ENCODE measurements at regions of chr7 and their contacts with region 1.

Region 1: DNA sequence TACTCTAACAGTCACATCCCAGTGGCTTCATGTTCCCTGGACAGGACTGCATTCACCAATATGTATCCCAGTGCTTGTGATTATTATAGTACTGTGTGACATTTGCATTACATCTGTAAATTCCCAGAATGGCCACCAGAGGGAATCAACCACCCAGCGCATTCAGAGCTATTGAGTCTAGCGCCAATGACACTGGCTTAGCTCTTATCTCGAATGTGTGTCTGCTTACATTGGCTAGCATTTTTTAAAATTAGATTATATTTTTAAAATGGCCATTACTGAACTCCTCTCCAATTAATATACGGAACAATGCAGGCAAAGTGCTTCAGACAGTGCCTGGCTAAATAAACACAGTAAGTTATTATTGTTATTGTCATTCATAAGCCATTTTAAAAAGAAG is 36.3 kb downstream of the TRIL start:
- DNase-seq: peak in 1 of 2 donors; percentile 29
- ATAC-seq: peak; percentile 96 to 97
- H3K4me3 ChIP-seq: no peak overlapping the region
- H3K27ac ChIP-seq: no peak overlapping the region
- H3K4me1 ChIP-seq: peaks cover 0 to 4% of the 10 kb centered on the region in 2 donors
- H3K27me3 ChIP-seq: peaks cover 0 to 7% (median 0%) of the 10 kb centered on the region in 3 donors
- CTCF ChIP-seq: peak; percentile 70 to 92 (median 76)
- POLR2A ChIP-seq: no peak

Region 2: DNA sequence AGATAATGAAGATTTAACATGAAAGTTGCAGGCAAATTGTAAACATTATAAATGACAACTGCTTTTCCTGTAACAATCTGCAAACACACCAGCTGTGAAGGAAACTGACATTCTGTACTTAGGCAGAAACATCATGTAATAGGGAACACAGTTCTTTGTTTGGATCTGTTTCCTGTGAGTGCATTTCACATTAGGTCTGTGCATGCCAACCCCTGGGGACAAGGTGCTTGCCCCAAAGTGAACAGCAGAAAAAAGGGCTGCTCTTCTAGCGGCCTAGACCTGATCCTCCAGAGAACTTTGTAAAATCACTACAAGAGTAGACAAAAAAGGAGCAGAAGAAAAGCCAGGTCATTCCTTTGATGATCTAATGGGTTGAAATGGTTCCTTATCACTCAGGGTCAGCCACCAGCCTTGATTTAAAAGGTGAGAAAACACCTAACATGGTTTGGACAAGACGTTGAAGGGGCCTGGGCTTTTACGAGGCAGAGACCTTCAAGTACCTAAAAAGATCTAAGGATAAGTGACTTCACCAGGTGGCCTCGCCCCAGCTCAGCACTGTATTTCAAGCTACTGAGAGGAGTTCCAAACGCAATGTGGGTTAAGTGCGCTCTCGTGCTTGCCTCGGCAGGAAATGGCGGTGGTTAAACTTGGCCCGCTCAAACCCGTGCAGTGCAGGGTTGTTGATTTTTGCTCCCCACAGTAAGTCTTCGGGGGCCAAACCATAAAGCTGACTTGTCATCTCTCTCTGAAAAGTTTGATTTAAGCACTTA is 259.8 kb before region 1 on chr7:
- in situ Hi-C with region 1: no loop called
- intact Hi-C with region 1: no loop called
- DNase-seq: no peak
- ATAC-seq: no peak
- H3K4me3 ChIP-seq: no peak overlapping the region
- H3K27ac ChIP-seq: no peak overlapping the region
- H3K4me1 ChIP-seq: no peaks in the 10 kb centered on the region
- H3K27me3 ChIP-seq: no peaks in the 10 kb centered on the region
- CTCF ChIP-seq: no peak
- POLR2A ChIP-seq: no peak

Region 3: DNA sequence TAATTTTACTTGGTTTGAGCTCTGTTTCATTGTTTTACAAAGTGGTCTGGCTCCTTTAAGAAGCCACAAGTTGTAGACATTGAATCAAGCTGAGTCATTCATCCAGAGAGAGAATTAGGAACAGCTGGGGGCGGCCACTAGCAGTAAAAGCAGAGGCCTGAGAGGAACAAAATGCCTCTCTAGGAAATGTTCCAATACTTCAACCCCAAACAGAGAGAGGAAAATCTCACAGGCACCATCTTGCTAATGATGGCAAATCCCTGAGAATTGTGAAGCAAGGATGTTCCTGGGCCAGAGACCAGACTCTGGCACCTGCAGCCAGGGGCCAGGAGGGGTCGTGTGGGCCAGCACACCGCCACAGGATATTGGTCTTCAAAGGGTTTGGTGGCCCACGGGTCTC is 62.8 kb after region 1 on chr7:
- in situ Hi-C with region 1: no loop called
- intact Hi-C with region 1: no loop called
- DNase-seq: peak; percentile 31 to 55
- ATAC-seq: peak in 1 of 2 donors; percentile 45
- H3K4me3 ChIP-seq: no peak overlapping the region
- H3K27ac ChIP-seq: peak overlapping the region; percentile 14 to 41 (median 34)
- H3K4me1 ChIP-seq: peaks cover 4 to 14% of the 10 kb centered on the region in 2 donors
- H3K27me3 ChIP-seq: no peaks in the 10 kb centered on the region
- CTCF ChIP-seq: no peak
- POLR2A ChIP-seq: no peak

Region 4: GRCh38 chr7:29281782-29282541 is 360.1 kb after region 1 on chr7:
- in situ Hi-C with region 1: no loop called
- intact Hi-C with region 1: no loop called
- DNase-seq: peak in 1 of 2 donors; percentile 49
- ATAC-seq: peak; percentile 74
- H3K4me3 ChIP-seq: no peak overlapping the region
- H3K27ac ChIP-seq: peak overlapping the region in 1 of 4 donors; percentile 36
- H3K4me1 ChIP-seq: no peaks in the 10 kb centered on the region
- H3K27me3 ChIP-seq: no peaks in the 10 kb centered on the region
- CTCF ChIP-seq: no peak
- POLR2A ChIP-seq: no peak

Region 5: DNA sequence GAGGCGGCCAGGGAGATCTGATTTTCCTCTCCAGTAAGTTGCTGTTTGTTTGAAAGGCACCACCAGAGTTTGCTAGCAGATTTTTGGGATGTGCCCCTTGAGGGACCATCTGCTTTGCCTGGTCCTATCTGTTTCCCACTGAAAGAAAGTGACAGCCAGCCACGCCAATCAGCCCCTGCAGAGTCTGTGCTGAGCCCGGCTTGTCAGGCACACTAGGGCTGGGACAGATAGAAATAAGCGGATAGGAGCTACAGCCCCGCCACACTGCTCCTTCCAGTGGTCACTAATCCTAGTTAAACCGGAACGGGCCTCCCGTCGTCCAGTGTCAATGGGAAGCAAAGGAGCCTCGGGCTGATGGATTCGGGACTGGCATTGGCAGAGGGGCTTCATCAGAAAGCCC is 479.9 kb after region 1 on chr7:
- in situ Hi-C with region 1: loop called (anchors 5 kb)
- intact Hi-C with region 1: no loop called
- DNase-seq: no peak
- ATAC-seq: no peak
- H3K4me3 ChIP-seq: no peak overlapping the region
- H3K27ac ChIP-seq: no peak overlapping the region
- H3K4me1 ChIP-seq: no peaks in the 10 kb centered on the region
- H3K27me3 ChIP-seq: no peaks in the 10 kb centered on the region
- CTCF ChIP-seq: no peak
- POLR2A ChIP-seq: no peak

Measured in gastrocnemius medialis (tissue), 4 donors.